H1 (cell line): ENCODE measurements at regions of chr6 and their contacts with region 1.

Region 1: DNA sequence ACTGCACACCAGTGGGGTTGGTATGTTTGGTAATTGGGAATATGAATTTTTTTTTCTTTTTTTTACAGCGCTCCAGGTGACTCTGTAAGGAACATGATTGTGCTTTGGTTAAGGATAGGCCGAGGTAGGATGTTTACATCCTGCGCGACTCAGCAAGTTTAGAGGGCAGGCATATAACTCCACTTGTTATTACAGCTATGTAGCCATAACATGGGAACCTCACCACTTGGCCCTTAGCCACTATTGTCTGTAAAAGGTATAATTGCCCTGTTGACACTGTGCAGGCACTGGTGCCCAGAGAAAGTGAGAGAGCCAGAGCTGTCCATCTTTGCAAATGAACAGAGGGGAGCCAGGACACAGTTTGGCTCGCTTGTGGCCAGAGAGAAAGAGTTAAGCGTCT is 172.9 kb downstream of the MCHR2 start:
- DNase-seq: no peak
- H3K4me3 ChIP-seq: no peak overlapping the region
- H3K27ac ChIP-seq: no peak overlapping the region
- H3K4me1 ChIP-seq: peaks cover 0 to 5% (median 0%) of the 10 kb centered on the region in 4 experiments; a peak in 1 of 7 replicates
- H3K27me3 ChIP-seq: no peaks in the 10 kb centered on the region
- CTCF ChIP-seq: no peak
- EP300 ChIP-seq: no peak
- POLR2A ChIP-seq: no peak
- RAD21 ChIP-seq: no peak

Region 2: GRCh38 chr6:99802396-99803031 is 18.6 kb before region 1 on chr6:
- CTCF ChIA-PET with region 1: interaction called, 13 read pairs
- POLR2A ChIA-PET with region 1: no interaction called
- DNase-seq: peak; percentile 70 to 93
- H3K4me3 ChIP-seq: no peak overlapping the region
- H3K27ac ChIP-seq: no peak overlapping the region
- H3K4me1 ChIP-seq: peaks cover 0 to 2% (median 0%) of the 10 kb centered on the region in 4 experiments; a peak in 1 of 7 replicates
- H3K27me3 ChIP-seq: no peaks in the 10 kb centered on the region
- CTCF ChIP-seq: peak; percentile 74 to 94 (median 94)
- EP300 ChIP-seq: peak in 1 of 2 experiments; percentile 28; a peak in 1 of 3 replicates
- POLR2A ChIP-seq: no peak
- RAD21 ChIP-seq: peak; percentile 57 to 73